ENCODE measurements at regions of chr12 and their contacts with region 1.

Region 1: DNA sequence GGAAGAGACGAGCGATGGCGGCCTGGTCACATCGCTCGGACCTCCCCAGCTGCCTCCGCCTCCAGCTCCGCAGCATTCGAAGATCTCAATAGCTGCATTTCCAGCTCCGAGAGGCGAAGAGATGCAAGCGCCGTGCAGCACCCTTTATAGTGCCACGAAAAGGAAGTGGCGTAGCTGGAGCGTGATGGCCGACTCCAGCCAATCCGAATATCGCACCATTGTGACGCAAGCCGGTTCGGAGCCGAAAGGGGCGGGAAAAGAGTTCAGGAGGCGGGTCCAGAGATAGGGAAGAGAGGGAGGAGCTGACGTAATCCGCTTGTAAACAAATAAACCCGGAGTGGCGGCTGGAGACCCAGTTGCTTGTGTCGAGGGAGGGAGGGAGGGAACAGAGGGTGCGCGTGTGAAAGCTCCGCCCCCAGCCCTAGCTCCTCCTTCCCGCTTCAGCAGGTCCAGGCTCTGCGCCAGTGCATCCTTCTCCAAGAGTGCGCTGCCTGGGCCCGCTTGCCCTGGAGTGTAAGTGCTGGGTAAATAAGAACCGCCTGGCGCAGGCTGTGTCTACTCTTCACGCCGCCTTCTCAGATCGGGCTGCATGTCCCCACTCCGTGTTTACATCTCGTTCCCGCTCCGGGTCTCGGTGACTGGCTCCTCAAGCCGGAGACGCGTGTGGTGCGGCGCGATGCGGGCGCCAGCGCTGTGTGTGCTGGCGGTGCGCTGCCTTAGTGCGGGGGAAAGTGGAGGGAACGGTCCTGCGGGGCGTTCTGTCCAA is at the start of gene BTG1:
- DNase-seq: peak; percentile 99
- ATAC-seq: peak; percentile 87 to 91
- total RNA-seq, gene BTG1: 121 to 152 TPM

Region 2: GRCh38 chr12:91382081-91382543 is 763.8 kb before region 1 on chr12:
- intact Hi-C with region 1: loop called in 1 of 2 experiments (anchors 10 kb)
- DNase-seq: peak; percentile 87
- ATAC-seq: peak; percentile 85 to 88

Region 3: DNA sequence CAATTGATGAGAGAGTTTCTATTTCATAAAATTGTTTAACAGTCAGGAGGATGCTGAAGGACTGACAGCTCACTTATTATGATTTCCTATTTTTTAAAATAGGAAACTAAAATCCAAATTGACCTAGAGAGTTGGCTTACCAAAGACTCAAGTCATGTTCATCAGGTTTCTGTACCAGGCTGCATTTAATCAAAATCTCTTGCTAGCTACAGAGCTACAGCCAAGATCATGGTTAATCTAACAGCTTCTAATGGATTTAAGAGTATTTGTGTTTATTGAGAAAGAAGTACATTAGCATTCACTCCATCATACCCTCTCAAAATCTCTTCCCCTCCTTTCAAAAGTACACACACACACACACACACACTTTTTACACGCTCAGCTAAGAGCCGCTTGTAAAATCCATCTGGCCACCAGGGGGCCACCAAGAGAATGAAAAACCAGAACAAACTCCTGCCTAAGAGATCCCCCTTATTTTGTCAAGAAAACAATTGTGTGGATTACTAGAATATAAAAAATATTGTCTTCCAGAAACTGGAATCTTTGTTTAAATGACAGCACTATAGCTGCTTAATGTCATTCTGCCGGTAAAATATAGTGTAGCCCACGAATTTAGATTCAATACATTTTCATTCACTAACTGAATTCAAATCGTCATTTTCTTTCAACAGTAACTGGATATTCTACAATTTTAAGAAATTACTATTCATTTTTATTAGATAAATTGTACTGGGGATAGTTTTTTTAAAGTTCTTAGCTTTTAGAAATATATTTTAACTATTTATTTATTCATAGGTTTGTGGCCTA is 334.2 kb before region 1 on chr12:
- intact Hi-C with region 1: loop called (anchors 5 kb)
- DNase-seq: peak; percentile 75
- ATAC-seq: peak; percentile 64 to 86

Region 4: DNA sequence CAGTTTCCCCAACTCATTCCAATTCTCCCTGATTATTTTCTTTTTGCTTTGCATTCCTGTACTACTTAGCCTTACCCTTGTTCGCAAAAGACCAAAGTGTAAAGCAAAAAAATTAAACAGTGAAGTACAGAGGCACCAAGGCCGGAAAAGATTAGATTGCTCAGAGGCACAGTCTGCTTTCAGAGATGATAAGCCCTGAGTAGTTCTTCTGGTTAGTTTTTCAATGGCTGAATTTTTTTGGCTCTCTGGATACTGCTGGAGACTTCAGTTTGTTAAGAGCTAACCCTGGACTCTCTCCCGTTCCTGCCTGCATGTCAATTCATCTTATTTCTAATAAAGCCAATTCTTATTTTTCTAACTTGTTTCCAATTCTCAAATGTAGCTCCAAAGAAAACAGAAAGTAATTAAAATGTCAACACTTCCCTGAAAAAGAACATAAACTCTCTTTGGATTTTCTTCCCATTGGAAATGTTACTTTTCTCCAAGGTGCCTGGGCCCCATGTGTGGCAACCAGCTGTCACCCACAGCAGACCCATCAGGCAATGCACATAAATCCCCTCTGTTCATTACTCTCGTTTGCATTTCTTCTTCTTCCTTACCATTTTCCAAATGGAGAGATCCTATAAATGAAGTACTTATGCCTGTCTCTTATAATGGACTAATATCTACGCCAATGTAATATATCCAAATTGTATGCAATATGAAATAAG is 143.1 kb before region 1 on chr12:
- intact Hi-C with region 1: loop called in 1 of 2 experiments (anchors 5 kb)
- DNase-seq: no peak
- ATAC-seq: peak; percentile 80 to 86

Region 5: GRCh38 chr12:92244036-92244435 is 98.1 kb after region 1 on chr12:
- intact Hi-C with region 1: loop called in 1 of 2 experiments (anchors 2 kb)
- DNase-seq: peak; percentile 19
- ATAC-seq: peak; percentile 86 to 88

Region 6: DNA sequence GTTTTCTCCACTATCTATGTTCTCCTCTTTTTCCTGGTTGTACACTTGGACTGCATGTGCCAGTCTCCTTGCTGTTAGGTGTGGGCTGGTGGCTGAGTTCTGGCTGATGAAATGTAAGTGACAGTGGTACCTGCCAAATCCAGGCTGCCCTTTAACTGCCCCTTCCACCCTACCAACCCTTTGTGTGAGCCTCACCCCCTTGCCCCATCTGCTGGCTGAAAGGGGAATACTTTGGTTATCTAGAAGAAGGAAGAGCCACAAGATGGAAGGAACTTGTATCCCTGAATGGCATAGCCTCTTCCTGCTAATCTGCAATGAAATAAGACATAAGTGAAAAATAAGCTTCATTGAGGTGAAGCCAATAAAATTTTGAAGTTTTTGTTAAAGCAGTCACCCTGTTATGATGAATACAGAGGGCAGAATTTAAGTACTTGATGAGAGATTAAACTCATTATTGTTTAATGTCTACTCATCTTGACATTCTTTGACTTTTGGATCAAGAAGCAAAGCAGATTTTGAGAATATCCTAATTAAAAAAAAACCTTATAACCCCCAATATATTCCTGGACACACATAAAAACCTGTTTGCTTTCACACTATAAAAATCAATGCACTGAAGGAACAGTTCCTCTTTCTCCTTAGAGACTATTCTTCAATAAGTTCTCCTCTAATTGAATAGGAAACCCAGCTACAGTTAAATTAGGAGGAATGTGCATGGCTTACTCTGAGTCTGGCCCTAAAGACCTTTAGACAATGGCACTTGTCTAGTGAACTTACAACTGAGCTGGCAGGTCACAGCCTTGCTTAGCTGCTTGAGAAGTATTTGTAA is 262.4 kb after region 1 on chr12:
- intact Hi-C with region 1: loop called in 1 of 2 experiments (anchors 5 kb)
- DNase-seq: peak; percentile 52
- ATAC-seq: peak; percentile 81 to 89

Region 7: DNA sequence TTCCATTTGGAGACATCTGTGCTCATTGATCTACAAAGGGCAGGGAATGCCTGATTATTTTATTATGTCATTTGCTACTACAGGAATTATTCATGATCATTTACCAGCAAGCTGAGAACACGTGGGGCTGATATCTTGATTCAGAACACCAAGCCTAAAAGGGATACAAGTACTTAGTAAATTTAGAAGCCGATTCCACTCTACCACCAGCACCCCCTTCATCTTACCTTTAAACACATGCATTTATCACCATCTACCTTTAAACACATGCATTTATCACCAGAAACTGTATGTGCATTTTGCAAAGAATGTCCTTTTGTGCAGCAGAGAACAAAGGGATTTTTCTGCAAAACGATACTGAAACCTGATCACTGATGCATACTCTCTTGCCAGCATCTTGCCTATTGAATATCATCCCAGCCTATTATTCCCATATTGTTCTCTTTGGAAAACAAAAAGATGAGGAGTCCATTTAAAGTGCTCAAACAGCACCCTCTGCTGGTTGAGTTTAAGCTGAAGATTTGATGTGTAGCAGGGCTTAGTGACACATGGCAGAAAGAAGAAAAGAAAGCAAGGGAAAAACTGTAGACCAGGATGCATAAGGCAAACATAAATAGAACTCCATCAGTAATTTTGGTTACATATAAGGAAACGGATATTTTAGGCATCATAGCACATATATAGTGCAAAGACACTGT is 424.3 kb after region 1 on chr12:
- intact Hi-C with region 1: loop called (anchors 5 to 10 kb)
- DNase-seq: peak; percentile 35
- ATAC-seq: peak; percentile 78 to 80

Measured in left cardiac atrium (tissue), 4 donors.